Posterior cingulate gyrus (tissue), 11 donors: ENCODE measurements at regions of chr4 and their contacts with region 1.

Region 1: GRCh38 chr4:59247032-59247431 is 1953.1 kb upstream of the ADGRL3 start:
- DNase-seq: no peak

Region 2: DNA sequence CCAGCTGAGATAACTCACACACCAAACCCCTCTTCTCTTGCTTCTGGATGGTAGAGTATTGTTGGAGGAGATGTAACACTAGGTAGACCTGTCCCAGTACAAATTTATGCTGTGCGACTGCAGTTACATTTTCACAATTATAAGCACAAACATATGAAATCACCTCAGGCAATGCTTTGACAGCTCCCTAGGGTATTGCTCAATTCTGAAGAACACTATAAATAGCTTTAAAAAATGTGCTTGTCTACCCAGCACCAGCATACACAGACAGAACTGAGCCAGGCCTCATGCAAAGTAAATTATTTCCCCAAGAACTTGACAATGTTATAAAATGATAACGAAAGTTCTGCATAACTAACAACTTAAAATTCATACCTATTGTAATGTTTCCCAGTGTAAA is 46.0 kb before region 1 on chr4:
- intact Hi-C with region 1: no loop called
- DNase-seq: no peak

Region 3: DNA sequence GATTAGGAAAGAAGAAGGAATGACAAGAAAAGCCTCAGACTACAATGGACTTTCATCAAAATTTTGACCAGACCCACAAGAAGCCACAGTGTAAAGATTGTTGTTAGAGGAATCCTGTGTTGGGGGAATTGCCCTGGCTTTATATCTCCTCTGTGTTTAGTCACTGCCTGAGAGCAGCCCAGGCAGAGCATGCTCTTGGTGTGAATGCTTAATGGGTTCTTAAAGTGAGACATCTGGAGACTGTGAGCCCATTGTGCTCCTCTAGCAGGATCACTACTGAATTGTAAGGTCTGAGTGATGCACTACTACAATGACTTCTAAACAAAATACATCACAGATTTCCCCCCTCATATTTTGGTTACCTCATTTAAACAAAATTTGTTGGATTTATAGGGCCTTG is 92.6 kb after region 1 on chr4:
- intact Hi-C with region 1: no loop called
- DNase-seq: peak in 1 of 10 donors; percentile 22

Region 4: DNA sequence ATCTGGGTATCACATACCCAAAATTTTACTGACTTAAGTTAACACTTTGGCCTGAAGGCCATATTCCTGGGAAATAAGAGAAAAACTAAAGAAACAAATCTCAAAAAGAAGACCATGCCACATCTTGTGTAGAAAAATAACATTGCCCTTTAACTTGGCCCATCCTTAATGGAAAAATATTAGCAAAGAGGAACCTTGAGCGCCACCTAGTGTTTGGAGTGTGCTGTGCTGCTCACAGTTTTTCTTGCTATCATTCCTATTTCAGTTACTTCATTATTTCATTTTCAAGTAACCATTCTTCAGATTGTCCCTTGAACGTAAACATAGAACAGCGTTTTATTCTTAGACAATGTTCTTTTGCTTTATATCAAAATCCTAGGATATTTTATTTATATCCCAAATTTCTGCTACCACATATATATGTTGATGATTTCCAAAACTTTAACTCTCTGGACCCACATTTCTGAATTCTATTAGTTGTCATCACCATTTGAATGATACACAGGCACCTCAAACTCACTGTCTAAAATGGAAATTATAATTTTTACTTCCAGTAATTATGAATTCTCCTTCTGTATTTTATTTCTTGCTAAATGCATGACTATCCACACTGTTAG is 954.1 kb after region 1 on chr4:
- intact Hi-C with region 1: loop called (anchors 1 kb)
- DNase-seq: peak in 6 of 10 donors; percentile 21 to 61 (median 48)